ENCODE measurements at regions of chr4 and their contacts with region 1.

Region 1: GRCh38 chr4:82373816-82374625 is at the start of gene HNRNPD:
- DNase-seq: peak; percentile 100
- H3K4me3 ChIP-seq: peak within 1 kb of the TSS; percentile 89 to 100 (median 100)
- H3K27ac ChIP-seq: peak within 1 kb of the TSS; percentile 97 to 98
- H3K4me1 ChIP-seq: peaks cover 21 to 45% (median 32%) of the 10 kb centered on the region in 4 experiments
- H3K27me3 ChIP-seq: no peaks in the 10 kb centered on the region

Region 2: GRCh38 chr4:82428969-82429727 is 55.1 kb after region 1 on chr4:
- CTCF ChIA-PET with region 1: interaction called, 24 read pairs
- POLR2A ChIA-PET with region 1: interaction called, 20 read pairs
- DNase-seq: peak; percentile 92 to 96 (median 95)
- H3K4me3 ChIP-seq: peak overlapping the region; percentile 86 to 97 (median 94)
- H3K27ac ChIP-seq: peak overlapping the region; percentile 79 to 94
- H3K4me1 ChIP-seq: peaks cover 22 to 48% (median 32%) of the 10 kb centered on the region in 4 experiments
- H3K27me3 ChIP-seq: no peaks in the 10 kb centered on the region